ENCODE measurements at regions of chr7 and their contacts with region 1.

Region 1: GRCh38 chr7:131859147-131859821 is 302.9 kb upstream of the PODXL start:
- DNase-seq: peak; percentile 69
- ATAC-seq: peak; percentile 80
- H3K4me3 Mint-ChIP-seq: no peak overlapping the region
- H3K27ac Mint-ChIP-seq: no peak overlapping the region
- H3K4me1 Mint-ChIP-seq: no peaks in the 10 kb centered on the region
- H3K27me3 Mint-ChIP-seq: peaks cover 5% of the 10 kb centered on the region
- CTCF ChIP-seq: peak; percentile 68

Region 2: GRCh38 chr7:131302876-131303707 is 556.2 kb before region 1 on chr7:
- CTCF ChIA-PET with region 1: no interaction called
- POLR2A ChIA-PET with region 1: no interaction called
- intact Hi-C with region 1: no loop called
- DNase-seq: peak; percentile 22
- ATAC-seq: no peak
- H3K4me3 Mint-ChIP-seq: no peak overlapping the region
- H3K27ac Mint-ChIP-seq: no peak overlapping the region
- H3K4me1 Mint-ChIP-seq: peaks cover 3% of the 10 kb centered on the region
- H3K27me3 Mint-ChIP-seq: no peaks in the 10 kb centered on the region
- CTCF ChIP-seq: no peak

Region 3: DNA sequence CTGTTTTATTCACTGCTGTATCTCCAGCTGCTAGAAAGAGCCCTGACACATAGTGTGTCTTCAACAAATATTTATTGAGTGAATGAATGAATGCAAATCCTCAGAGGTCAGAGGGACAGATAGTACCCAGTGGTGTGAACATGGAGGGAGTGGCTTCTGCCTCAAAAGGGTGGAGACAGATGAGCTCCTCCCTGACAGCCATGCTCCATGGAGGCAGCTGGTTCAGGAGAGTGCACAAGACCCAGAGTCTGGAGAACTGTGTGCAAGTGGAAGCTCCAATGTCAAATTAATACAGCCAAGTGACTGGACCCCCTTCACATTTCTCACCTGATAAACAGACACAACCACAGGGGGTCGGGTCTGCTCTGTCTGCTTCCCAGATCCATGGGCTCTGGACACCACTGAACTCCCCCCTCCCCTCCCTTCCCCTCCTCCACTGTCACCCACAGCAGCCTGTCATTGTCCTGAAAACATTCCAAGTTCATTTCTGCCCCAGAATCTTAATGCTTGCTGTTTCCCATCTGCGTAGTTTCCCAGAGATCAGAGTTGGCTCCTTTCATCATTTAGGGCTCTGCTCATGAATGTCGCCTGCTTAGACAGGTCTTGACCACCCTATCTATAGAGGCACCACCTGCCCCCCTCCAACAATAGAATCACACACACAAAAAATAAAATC is 10.0 kb after region 1 on chr7:
- CTCF ChIA-PET with region 1: interaction called, 18 read pairs
- POLR2A ChIA-PET with region 1: no interaction called
- intact Hi-C with region 1: no loop called
- DNase-seq: no peak
- ATAC-seq: no peak
- H3K4me3 Mint-ChIP-seq: no peak overlapping the region
- H3K27ac Mint-ChIP-seq: no peak overlapping the region
- H3K4me1 Mint-ChIP-seq: no peaks in the 10 kb centered on the region
- H3K27me3 Mint-ChIP-seq: peaks cover 10% of the 10 kb centered on the region
- CTCF ChIP-seq: no peak

Region 4: DNA sequence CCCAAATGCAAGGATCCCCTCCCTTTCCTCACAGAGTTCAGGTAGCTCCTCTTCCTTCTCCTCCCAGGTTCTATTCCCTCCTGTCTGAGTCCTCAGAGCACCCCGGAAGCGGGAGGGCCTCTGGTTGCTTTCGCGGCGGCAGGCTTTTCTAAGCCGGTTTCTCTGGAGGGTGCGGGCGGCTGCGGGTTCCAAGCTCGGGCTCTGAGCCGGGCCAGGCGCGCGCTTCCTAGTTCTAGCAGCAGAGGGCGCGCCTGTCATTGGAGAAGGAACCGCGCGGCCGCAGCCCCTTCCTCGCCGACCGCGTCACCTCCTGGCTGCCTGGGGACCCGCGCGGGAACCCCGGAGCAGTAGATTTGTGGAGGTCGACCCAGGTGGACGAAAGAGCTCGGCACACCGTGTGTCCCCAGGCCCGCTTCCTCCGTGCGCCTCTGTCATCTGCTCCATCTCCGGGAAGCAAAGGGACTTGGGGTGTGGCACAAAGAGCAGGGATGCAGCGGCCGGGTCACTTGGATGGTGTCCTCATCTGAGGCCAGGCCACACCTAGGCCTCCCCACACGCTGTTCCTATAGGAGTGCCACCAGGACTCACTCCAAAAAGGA is 86.1 kb after region 1 on chr7:
- CTCF ChIA-PET with region 1: interaction called, 10 read pairs
- POLR2A ChIA-PET with region 1: no interaction called
- intact Hi-C with region 1: no loop called
- DNase-seq: peak; percentile 54
- ATAC-seq: peak; percentile 76
- H3K4me3 Mint-ChIP-seq: no peak overlapping the region
- H3K27ac Mint-ChIP-seq: no peak overlapping the region
- H3K4me1 Mint-ChIP-seq: no peaks in the 10 kb centered on the region
- H3K27me3 Mint-ChIP-seq: peaks cover 23% of the 10 kb centered on the region
- CTCF ChIP-seq: peak; percentile 82

Measured in activated CD8-positive, alpha-beta T cell treated with anti-CD3 and anti-CD28 coated beads for 36 hours (primary cell).